Endothelial cell of umbilical vein (primary cell): ENCODE measurements at regions of chr1 and their contacts with region 1.

Region 1: DNA sequence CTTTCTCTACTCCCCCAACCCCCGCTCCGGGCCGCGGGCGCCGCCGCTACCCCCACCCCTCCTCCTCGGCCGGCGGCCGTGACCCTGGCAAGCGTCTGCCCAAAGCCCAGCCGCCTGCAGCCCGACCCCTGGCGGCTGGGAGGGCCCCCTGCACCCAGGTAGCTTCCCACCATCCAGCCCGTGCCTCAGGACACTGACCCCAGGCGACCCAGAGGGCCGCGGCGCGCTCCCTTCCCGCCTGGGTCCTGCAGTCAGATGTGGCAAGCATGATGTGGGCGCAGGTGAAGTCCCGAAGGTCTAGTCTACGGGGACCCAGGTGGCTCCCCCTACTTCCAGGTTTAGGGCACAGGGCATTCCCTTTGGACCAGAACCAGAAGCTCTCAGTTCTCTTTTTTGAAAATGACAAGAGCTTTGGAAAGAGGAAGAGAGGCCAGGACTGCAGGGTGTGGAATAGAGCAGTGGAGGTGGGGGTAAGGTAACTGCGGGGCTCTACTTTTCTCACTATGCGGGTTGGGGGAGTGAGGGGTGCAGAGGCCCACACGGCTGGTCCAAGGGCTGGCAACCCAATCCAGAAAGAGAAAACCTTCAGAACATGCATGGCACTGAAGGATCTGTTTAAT is at the start of gene DENND4B:
- DNase-seq: peak; percentile 65
- H3K4me3 ChIP-seq: peak within 1 kb of the TSS; percentile 42 to 88 (median 73)
- H3K27ac ChIP-seq: peak within 1 kb of the TSS; percentile 63
- H3K4me1 ChIP-seq: peaks cover 9% of the 10 kb centered on the region
- H3K27me3 ChIP-seq: no peaks in the 10 kb centered on the region
- CTCF ChIP-seq: peak; percentile 89 to 97
- POLR2A ChIP-seq: no peak
- total RNA-seq, gene DENND4B: 54.3 and 57.8 TPM in 2 replicates

Region 2: GRCh38 chr1:153677718-153678505 is 268.8 kb before region 1 on chr1:
- CTCF ChIA-PET with region 1: no interaction called
- POLR2A ChIA-PET with region 1: no interaction called
- dilution Hi-C with region 1: no loop called
- intact Hi-C with region 1: loop called (anchors 1 kb)
- DNase-seq: peak; percentile 72
- H3K4me3 ChIP-seq: peak overlapping the region; percentile 15 to 44 (median 22)
- H3K27ac ChIP-seq: no peak overlapping the region
- H3K4me1 ChIP-seq: peaks cover 11% of the 10 kb centered on the region
- H3K27me3 ChIP-seq: peaks cover 4 to 5% of the 10 kb centered on the region in 2 experiments
- CTCF ChIP-seq: peak; percentile 91 to 92
- POLR2A ChIP-seq: no peak

Region 3: GRCh38 chr1:153688276-153688675 is 258.5 kb before region 1 on chr1:
- CTCF ChIA-PET with region 1: no interaction called
- POLR2A ChIA-PET with region 1: no interaction called
- dilution Hi-C with region 1: no loop called
- intact Hi-C with region 1: no loop called
- DNase-seq: no peak
- H3K4me3 ChIP-seq: no peak overlapping the region
- H3K27ac ChIP-seq: no peak overlapping the region
- H3K4me1 ChIP-seq: no peaks in the 10 kb centered on the region
- H3K27me3 ChIP-seq: no peaks in the 10 kb centered on the region
- CTCF ChIP-seq: no peak
- POLR2A ChIP-seq: no peak

Region 4: GRCh38 chr1:153816283-153816889 is 130.3 kb before region 1 on chr1:
- CTCF ChIA-PET with region 1: interaction called, 65 read pairs
- POLR2A ChIA-PET with region 1: no interaction called
- dilution Hi-C with region 1: no loop called
- intact Hi-C with region 1: loop called (anchors 1 kb)
- DNase-seq: no peak
- H3K4me3 ChIP-seq: no peak overlapping the region
- H3K27ac ChIP-seq: no peak overlapping the region
- H3K4me1 ChIP-seq: peaks cover 10% of the 10 kb centered on the region
- H3K27me3 ChIP-seq: no peaks in the 10 kb centered on the region
- CTCF ChIP-seq: no peak
- POLR2A ChIP-seq: no peak

Region 5: GRCh38 chr1:153880962-153881361 is 65.8 kb before region 1 on chr1:
- CTCF ChIA-PET with region 1: interaction called, 8 read pairs
- POLR2A ChIA-PET with region 1: no interaction called
- dilution Hi-C with region 1: no loop called
- intact Hi-C with region 1: loop called (anchors 1 kb)
- DNase-seq: peak; percentile 99
- H3K4me3 ChIP-seq: peak overlapping the region; percentile 12 to 70 (median 32)
- H3K27ac ChIP-seq: peak overlapping the region; percentile 81
- H3K4me1 ChIP-seq: peaks cover 23% of the 10 kb centered on the region
- H3K27me3 ChIP-seq: no peaks in the 10 kb centered on the region
- CTCF ChIP-seq: no peak
- POLR2A ChIP-seq: no peak

Region 6: DNA sequence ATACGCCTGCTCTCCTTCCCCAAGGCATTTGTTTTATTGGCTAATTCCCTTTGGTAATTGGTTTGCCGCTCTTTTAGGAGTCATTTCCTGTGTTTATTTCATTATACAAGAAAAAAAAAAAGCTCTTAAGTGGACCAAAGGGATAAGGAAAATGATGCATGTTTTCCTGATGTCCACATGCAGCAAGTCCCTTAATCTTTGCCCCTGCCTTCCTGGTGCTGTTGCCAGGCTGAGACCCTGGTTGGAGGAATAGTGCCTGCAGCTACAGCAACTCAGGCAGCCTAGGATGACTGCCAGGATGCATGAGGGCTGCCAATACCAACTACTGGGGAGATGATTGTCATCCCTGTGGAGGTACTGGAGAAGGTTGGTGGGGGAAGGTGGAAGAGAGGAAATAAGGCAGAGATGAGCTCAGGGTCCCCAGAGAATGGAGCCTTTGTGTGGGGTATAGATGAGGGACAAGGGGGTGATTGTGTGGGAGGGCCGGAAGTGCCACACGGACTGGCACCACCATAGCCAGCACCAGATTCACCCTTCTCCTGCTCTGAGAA is 17.9 kb before region 1 on chr1:
- CTCF ChIA-PET with region 1: interaction called, 34 read pairs
- POLR2A ChIA-PET with region 1: no interaction called
- dilution Hi-C with region 1: no loop called
- intact Hi-C with region 1: no loop called
- DNase-seq: peak; percentile 91
- H3K4me3 ChIP-seq: no peak overlapping the region
- H3K27ac ChIP-seq: peak overlapping the region; percentile 4
- H3K4me1 ChIP-seq: peaks cover 19% of the 10 kb centered on the region
- H3K27me3 ChIP-seq: no peaks in the 10 kb centered on the region
- CTCF ChIP-seq: no peak
- POLR2A ChIP-seq: no peak

Region 7: GRCh38 chr1:153967082-153968000 is 20.6 kb after region 1 on chr1 and contains the start of gene CREB3L4:
- CTCF ChIA-PET with region 1: interaction called, 37 read pairs
- POLR2A ChIA-PET with region 1: interaction called, 4 read pairs
- dilution Hi-C with region 1: no loop called
- intact Hi-C with region 1: loop called (anchors 1 kb)
- DNase-seq: peak; percentile 97
- H3K4me3 ChIP-seq: peak within 1 kb of the TSS; percentile 42 to 68 (median 62)
- H3K27ac ChIP-seq: peak within 1 kb of the TSS; percentile 29
- H3K4me1 ChIP-seq: peaks cover 34% of the 10 kb centered on the region
- H3K27me3 ChIP-seq: no peaks in the 10 kb centered on the region
- CTCF ChIP-seq: peak in 1 of 2 donors; percentile 51
- POLR2A ChIP-seq: peak; percentile 73
- total RNA-seq, gene CREB3L4: 8.1 and 9.9 TPM in 2 replicates

Region 8: GRCh38 chr1:154014154-154014910 is 67.6 kb after region 1 on chr1:
- CTCF ChIA-PET with region 1: no interaction called
- POLR2A ChIA-PET with region 1: no interaction called
- dilution Hi-C with region 1: no loop called
- intact Hi-C with region 1: no loop called
- DNase-seq: no peak
- H3K4me3 ChIP-seq: no peak overlapping the region
- H3K27ac ChIP-seq: no peak overlapping the region
- H3K4me1 ChIP-seq: no peaks in the 10 kb centered on the region
- H3K27me3 ChIP-seq: no peaks in the 10 kb centered on the region
- CTCF ChIP-seq: no peak
- POLR2A ChIP-seq: no peak

Region 9: GRCh38 chr1:154097873-154098272 is 151.1 kb after region 1 on chr1:
- CTCF ChIA-PET with region 1: no interaction called
- POLR2A ChIA-PET with region 1: no interaction called
- dilution Hi-C with region 1: no loop called
- intact Hi-C with region 1: no loop called
- DNase-seq: no peak
- H3K4me3 ChIP-seq: no peak overlapping the region
- H3K27ac ChIP-seq: no peak overlapping the region
- H3K4me1 ChIP-seq: no peaks in the 10 kb centered on the region
- H3K27me3 ChIP-seq: peaks cover 0 to 5% of the 10 kb centered on the region in 2 experiments
- CTCF ChIP-seq: no peak
- POLR2A ChIP-seq: no peak